A673 (cell line): ENCODE measurements at regions of chr5 and their contacts with region 1.

Region 1: GRCh38 chr5:145246961-145247744 is 588.0 kb downstream of the PRELID2 start:
- DNase-seq: peak; percentile 46
- H3K4me3 ChIP-seq: no peak overlapping the region
- H3K27ac ChIP-seq: peak overlapping the region; percentile 97
- H3K4me1 ChIP-seq: peaks cover 65% of the 10 kb centered on the region
- H3K27me3 ChIP-seq: no peaks in the 10 kb centered on the region
- CTCF ChIP-seq: no peak

Region 2: DNA sequence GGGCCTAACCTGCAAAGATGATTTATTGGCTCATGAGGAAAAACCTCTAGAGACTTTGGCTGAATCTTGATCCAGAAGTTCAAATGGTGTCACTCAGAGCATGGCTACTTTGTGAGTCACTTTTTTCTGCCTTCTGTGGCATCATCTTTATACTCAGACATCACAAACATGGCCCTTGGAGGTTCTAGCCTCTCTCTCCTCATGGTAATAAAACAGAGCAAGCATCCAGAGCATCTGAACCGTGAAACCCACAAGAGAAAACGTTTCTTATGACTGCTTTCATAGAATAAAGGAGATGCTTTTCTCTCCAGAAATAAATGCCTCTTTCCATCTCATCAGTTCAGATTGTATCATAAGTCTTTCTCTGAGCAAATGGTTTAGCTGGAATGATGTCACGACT is 296.2 kb before region 1 on chr5:
- CTCF ChIA-PET with region 1: no interaction called
- POLR2A ChIA-PET with region 1: no interaction called
- intact Hi-C with region 1: no loop called
- DNase-seq: no peak
- H3K4me3 ChIP-seq: no peak overlapping the region
- H3K27ac ChIP-seq: no peak overlapping the region
- H3K4me1 ChIP-seq: no peaks in the 10 kb centered on the region
- H3K27me3 ChIP-seq: no peaks in the 10 kb centered on the region
- CTCF ChIP-seq: no peak

Region 3: DNA sequence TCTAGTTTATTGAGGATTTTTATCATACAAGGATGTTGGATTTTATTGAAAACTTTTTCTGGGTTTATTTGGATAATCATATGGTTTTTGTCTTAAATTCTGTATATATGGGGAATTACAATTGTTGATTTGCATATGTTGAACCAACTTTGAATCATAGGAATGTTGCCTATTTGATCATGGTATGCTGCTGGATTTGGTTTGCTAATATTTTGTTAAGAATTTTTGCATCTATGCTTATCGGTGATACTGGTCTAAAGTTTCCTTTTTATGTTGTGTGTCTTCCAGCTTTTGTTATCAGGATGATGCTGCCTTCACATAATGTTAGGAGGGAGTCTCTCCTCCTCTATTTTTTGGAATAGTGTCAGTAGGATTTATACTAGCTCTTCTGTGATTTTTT is 157.0 kb before region 1 on chr5:
- CTCF ChIA-PET with region 1: no interaction called
- POLR2A ChIA-PET with region 1: no interaction called
- intact Hi-C with region 1: no loop called
- DNase-seq: no peak
- H3K4me3 ChIP-seq: no peak overlapping the region
- H3K27ac ChIP-seq: no peak overlapping the region
- H3K4me1 ChIP-seq: no peaks in the 10 kb centered on the region
- H3K27me3 ChIP-seq: no peaks in the 10 kb centered on the region
- CTCF ChIP-seq: no peak

Region 4: DNA sequence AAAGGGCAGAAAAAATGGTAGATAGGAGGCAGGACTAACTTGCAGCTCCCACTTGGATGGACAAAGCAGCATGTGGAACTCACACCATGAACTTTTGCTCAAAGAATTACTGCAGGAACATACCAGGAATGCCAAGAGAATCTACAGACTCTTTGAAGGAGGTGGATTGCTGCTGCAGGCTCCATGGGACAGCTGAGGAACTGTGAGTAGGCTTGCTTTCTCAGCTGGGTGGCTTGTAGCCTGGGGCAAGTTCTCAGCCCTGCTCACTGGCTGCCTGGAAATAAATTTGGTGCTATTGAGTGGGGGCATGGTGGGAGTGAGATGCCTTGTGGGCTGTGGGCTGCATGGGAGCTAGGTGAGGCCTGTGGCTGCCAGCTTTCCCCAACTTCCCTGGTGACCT is 13.5 kb after region 1 on chr5:
- CTCF ChIA-PET with region 1: no interaction called
- POLR2A ChIA-PET with region 1: no interaction called
- intact Hi-C with region 1: no loop called
- DNase-seq: no peak
- H3K4me3 ChIP-seq: no peak overlapping the region
- H3K27ac ChIP-seq: no peak overlapping the region
- H3K4me1 ChIP-seq: no peaks in the 10 kb centered on the region
- H3K27me3 ChIP-seq: no peaks in the 10 kb centered on the region
- CTCF ChIP-seq: no peak

Region 5: GRCh38 chr5:145347026-145347616 is 100.0 kb after region 1 on chr5:
- CTCF ChIA-PET with region 1: no interaction called
- POLR2A ChIA-PET with region 1: no interaction called
- intact Hi-C with region 1: loop called (anchors 5 kb)
- DNase-seq: peak; percentile 83
- H3K4me3 ChIP-seq: no peak overlapping the region
- H3K27ac ChIP-seq: no peak overlapping the region
- H3K4me1 ChIP-seq: peaks cover 17% of the 10 kb centered on the region
- H3K27me3 ChIP-seq: no peaks in the 10 kb centered on the region
- CTCF ChIP-seq: peak; percentile 79

Region 6: GRCh38 chr5:145562931-145563330 is 315.8 kb after region 1 on chr5:
- CTCF ChIA-PET with region 1: no interaction called
- POLR2A ChIA-PET with region 1: no interaction called
- intact Hi-C with region 1: loop called (anchors 2 kb)
- DNase-seq: peak; percentile 97
- H3K4me3 ChIP-seq: no peak overlapping the region
- H3K27ac ChIP-seq: peak overlapping the region; percentile 67
- H3K4me1 ChIP-seq: peaks cover 48% of the 10 kb centered on the region
- H3K27me3 ChIP-seq: no peaks in the 10 kb centered on the region
- CTCF ChIP-seq: no peak

Region 7: DNA sequence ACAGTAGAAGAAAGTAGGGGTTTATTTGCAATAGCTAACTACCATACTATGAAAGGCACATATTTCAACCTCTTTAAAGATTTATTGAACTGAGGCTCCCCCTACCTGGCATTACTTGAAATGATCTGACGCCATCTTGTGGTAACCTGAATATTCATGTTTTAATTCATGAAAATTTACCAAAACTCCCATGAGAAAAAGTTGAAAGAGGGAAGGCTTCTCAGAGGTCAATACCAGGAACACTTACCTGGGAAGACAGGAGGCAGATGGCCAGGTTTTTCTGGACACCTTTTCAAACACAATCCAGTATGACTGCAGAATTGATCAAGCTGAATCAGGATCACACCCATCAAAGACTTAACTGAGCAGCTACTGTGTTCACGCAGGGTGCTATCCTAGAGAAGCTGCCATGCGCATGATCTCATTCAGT is 578.6 kb after region 1 on chr5:
- CTCF ChIA-PET with region 1: no interaction called
- POLR2A ChIA-PET with region 1: no interaction called
- intact Hi-C with region 1: loop called (anchors 5 kb)
- DNase-seq: peak; percentile 83
- H3K4me3 ChIP-seq: no peak overlapping the region
- H3K27ac ChIP-seq: no peak overlapping the region
- H3K4me1 ChIP-seq: peaks cover 69% of the 10 kb centered on the region
- H3K27me3 ChIP-seq: no peaks in the 10 kb centered on the region
- CTCF ChIP-seq: peak; percentile 87

Region 8: DNA sequence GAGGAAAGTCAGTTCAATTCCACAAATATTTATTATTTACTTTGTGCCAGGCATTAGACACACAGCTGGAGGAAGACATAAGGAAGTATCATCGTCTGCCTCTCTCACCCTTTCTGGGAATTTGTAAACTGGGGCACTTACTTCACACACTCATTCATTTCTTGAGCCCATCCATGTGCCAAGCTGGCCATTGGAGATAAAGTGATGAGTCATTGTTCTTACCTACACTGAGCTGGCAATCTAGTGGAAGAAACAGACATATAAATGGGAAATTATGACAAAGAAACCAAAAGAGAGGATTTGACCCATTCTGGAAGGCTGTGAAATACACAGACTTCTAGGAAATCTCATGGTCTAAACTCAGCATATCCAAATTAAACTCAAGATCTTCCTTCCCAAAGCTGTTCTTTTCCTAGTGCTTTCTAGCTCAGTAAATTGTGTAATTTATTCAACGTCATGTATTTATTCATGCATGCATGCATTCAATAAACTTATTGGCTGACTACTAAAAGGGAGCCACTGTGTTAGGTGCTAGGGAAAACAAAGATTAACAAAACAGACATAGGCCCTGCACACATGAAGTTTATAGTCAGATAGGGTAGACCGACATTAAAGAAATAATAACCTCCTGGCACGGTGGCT is 754.5 kb after region 1 on chr5:
- CTCF ChIA-PET with region 1: no interaction called
- POLR2A ChIA-PET with region 1: no interaction called
- intact Hi-C with region 1: loop called (anchors 1 kb)
- DNase-seq: peak; percentile 92
- H3K4me3 ChIP-seq: no peak overlapping the region
- H3K27ac ChIP-seq: peak overlapping the region; percentile 99
- H3K4me1 ChIP-seq: peaks cover 80% of the 10 kb centered on the region
- H3K27me3 ChIP-seq: no peaks in the 10 kb centered on the region
- CTCF ChIP-seq: no peak